ENCODE measurements at regions of chr15 and their contacts with region 1.

Region 1: GRCh38 chr15:47184003-47184907 is 533.0 kb upstream of the SEMA6D start:
- DNase-seq: peak; percentile 27
- ATAC-seq: peak; percentile 53 to 82

Region 2: DNA sequence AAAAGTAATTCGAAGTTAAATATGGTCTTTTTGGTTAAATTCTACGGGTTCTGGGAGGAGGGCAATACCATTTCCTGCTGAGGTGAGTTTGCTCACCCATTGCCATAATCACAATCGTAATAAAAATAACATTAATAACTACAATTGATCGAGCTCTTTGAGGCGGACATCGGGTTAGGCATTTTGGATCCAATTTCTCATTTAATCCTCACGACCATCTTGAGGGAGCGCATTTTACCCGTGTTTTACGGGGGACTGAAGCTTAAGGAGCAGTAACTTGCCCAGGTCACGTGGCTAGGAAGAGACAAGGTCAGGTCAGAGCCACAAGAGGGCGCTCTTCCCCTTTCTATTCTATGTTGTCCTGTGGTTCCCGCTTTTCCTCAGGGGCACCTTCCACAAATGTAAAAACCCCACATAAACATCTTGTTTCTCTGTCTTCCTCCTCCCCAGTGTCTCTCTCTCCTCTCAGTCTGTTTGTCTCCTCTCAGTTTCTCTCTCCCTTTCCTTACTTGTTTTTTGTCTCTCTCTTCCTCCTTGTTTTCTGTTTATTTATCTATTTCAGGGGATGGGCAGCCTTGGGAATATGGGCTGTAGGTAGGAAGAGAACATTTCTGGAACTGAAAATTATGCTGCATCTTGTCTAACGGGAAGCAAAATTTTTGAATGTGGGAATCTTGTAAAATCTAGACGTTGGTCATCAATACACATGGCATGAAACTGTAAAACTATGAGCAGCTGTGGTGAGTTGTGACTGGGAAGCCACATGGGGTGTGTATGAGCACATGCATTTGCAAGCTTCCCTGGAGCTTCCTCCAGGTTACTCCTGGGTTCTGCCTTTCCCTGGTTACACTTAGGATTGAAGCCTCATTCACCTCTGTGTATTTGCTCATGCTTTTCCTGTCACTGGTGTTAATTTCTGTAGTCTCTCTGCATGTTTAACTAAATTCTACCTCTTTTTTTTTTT is 1478.5 kb before region 1 on chr15:
- intact Hi-C with region 1: loop called in 1 of 2 experiments (anchors 10 kb)
- DNase-seq: peak; percentile 75
- ATAC-seq: peak; percentile 90 to 91

Region 3: DNA sequence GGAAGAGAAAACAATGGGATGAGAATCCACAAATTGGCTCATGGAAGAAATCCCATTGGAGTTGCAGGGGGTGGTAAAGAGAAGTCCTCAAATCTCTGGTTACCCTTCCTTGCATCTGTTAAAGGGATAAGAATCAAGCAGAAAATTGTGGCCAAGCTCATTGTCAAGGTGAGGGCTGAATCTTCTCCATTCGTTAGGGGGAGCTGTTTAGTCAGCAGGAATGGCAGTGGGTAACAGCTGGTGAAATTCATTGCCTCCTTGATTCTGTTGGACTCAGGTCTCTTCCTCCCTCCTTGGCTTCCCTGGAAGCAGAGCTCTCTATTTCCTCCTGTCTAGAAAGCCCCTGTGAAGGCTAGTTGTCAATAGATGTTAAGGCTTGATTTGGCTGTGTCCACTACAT is 190.0 kb after region 1 on chr15:
- intact Hi-C with region 1: no loop called
- DNase-seq: no peak
- ATAC-seq: no peak

Region 4: GRCh38 chr15:47431501-47431900 is 247.2 kb after region 1 on chr15:
- intact Hi-C with region 1: no loop called
- DNase-seq: no peak
- ATAC-seq: no peak